HepG2 (cell line): ENCODE measurements at regions of chr1 and their contacts with region 1.

Region 1: DNA sequence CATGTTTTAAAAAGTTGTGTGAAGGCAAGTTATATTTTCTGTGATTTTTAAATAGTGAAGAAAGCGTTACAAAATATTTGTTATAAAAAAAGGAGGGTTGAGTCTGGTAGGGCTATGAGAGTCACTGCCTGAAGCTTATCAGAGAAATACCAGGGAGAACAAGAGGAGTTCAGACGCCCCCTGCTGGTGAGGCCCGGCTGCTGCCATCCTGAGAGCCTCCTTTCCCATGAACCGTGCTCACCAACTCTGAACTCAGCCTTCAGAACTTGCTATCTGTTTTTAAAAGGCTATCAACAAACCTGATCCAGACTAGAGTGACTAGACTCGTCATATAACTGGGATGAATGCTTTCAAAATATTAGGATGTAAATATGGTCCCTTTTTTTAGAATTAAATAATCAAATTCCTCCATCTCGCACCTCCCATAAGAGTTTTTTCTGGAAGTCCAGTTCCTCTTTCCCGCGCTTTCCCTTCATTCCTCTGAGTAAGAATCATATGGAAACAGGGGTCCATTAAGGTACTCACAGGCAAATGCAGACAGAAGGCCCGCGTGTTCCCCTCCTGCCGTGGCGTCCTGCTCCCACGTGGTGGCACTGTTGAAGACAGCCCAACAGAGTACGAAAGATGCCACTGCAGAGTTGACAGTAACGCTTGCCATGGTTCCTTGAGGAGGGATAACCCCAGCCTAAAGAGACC is 26.2 kb upstream of the SPATA6 start:
- DNase-seq: peak; percentile 61
- ATAC-seq: peak; percentile 78
- H3K4me3 ChIP-seq: no peak overlapping the region
- H3K27ac ChIP-seq: no peak overlapping the region
- H3K4me1 ChIP-seq: peaks cover 31% of the 10 kb centered on the region
- H3K27me3 ChIP-seq: no peaks in the 10 kb centered on the region
- CTCF ChIP-seq: peak; percentile 77
- EP300 ChIP-seq: no peak
- POLR2A ChIP-seq: no peak
- RAD21 ChIP-seq: peak; percentile 23; the same call in 1 of the 2 replicates

Region 2: GRCh38 chr1:48356901-48357300 is 141.3 kb before region 1 on chr1:
- CTCF ChIA-PET with region 1: no interaction called
- POLR2A ChIA-PET with region 1: no interaction called
- in situ Hi-C with region 1: no loop called
- intact Hi-C with region 1: loop called (anchors 2 kb)
- DNase-seq: no peak
- ATAC-seq: no peak
- H3K4me3 ChIP-seq: no peak overlapping the region
- H3K27ac ChIP-seq: no peak overlapping the region
- H3K4me1 ChIP-seq: no peaks in the 10 kb centered on the region
- H3K27me3 ChIP-seq: no peaks in the 10 kb centered on the region
- CTCF ChIP-seq: 0 out of 2 replicates have a peak, but pooled peaks have one; percentile 5
- EP300 ChIP-seq: no peak
- POLR2A ChIP-seq: no peak
- RAD21 ChIP-seq: no peak

Region 3: DNA sequence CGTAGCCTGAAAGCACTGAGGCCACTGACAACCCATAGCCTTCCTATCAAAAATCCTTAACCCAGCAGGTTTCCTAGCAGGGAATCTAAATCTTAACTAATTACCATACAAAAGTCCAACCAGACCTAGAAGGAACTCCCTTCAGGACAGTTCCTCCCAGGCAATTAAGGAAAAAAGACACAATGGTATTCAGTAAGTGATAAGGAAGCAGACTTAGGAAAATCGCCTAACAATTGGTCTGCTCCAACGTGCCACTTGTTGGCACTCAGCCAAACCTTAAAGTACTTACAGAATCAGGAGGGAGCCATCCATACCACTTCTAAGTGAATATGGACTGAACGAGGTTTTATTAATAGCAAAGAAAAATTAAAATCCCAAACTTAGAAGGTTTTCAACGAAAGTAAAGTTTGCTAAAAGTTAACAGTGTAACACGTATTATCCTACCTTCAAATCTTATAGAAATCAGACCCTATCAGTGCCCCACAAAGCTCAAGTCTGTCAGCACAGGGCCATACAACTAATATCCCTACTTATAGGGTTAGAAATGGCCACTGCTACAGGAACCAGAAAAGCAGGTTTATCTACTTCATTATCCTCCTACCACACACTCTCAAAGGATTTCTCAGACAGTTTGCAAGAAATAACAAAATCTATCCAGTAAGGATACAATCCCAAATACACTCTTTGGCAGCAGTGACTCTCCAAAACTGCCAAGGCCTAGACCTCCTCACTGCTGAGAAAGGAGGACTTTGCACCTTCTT is 55.2 kb before region 1 on chr1:
- CTCF ChIA-PET with region 1: no interaction called
- POLR2A ChIA-PET with region 1: no interaction called
- in situ Hi-C with region 1: no loop called
- intact Hi-C with region 1: no loop called
- DNase-seq: no peak
- ATAC-seq: no peak
- H3K4me3 ChIP-seq: no peak overlapping the region
- H3K27ac ChIP-seq: no peak overlapping the region
- H3K4me1 ChIP-seq: peaks cover 24% of the 10 kb centered on the region
- H3K27me3 ChIP-seq: no peaks in the 10 kb centered on the region
- CTCF ChIP-seq: no peak
- EP300 ChIP-seq: no peak
- POLR2A ChIP-seq: no peak
- RAD21 ChIP-seq: no peak

Region 4: GRCh38 chr1:48471691-48472576 is 26.3 kb before region 1 on chr1 and contains the start of gene SPATA6:
- CTCF ChIA-PET with region 1: no interaction called
- POLR2A ChIA-PET with region 1: interaction called, 5 read pairs
- in situ Hi-C with region 1: no loop called
- intact Hi-C with region 1: loop called (anchors 1 kb)
- DNase-seq: peak; percentile 83
- ATAC-seq: peak; percentile 96
- H3K4me3 ChIP-seq: peak within 1 kb of the TSS; percentile 66 to 77 (median 75)
- H3K27ac ChIP-seq: no peak within 1 kb of the TSS
- H3K4me1 ChIP-seq: peaks cover 22% of the 10 kb centered on the region
- H3K27me3 ChIP-seq: no peaks in the 10 kb centered on the region; a peak in 1 of 5 replicates
- CTCF ChIP-seq: 0 out of 2 replicates have a peak, but pooled peaks have one; percentile 21
- EP300 ChIP-seq: no peak
- POLR2A ChIP-seq: peak; percentile 44 to 60; a peak in 3 of 4 replicates
- RAD21 ChIP-seq: no peak
- total RNA-seq, gene SPATA6: 1.8 and 3.3 TPM in 2 replicates

Region 5: DNA sequence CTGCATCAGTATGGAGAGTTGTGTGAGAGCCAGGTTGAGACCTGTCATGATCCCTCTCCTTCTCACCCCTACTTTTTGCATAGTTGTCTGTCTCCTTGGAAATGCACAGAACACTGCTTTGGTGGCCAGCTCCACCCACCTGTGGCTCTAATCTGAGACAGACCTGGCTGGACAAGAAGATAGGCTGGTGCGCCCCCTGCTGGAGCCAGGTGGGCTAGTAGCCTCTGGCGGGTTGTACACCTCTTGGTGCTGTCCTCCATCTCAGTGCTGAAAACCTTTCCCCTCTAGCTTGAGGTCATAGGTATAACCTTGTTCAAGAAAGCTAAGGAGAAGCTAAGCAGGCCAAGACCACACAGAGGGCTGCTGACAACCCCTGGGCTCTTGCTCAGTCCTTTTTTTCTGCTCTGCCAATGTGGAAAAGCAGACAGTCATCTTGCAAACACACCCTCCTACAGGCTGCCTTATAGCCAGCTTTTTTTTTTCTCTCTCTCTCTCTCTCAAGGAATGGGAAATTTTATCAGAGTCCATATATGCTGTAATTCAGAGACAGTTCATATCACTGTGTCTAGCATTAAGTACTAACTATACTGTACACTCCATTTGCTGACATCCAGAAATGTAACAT is 32.6 kb after region 1 on chr1:
- CTCF ChIA-PET with region 1: no interaction called
- POLR2A ChIA-PET with region 1: no interaction called
- in situ Hi-C with region 1: no loop called
- intact Hi-C with region 1: no loop called
- DNase-seq: peak; percentile 59
- ATAC-seq: peak; percentile 97
- H3K4me3 ChIP-seq: no peak overlapping the region
- H3K27ac ChIP-seq: no peak overlapping the region
- H3K4me1 ChIP-seq: no peaks in the 10 kb centered on the region
- H3K27me3 ChIP-seq: no peaks in the 10 kb centered on the region
- CTCF ChIP-seq: peak; percentile 91
- EP300 ChIP-seq: no peak
- POLR2A ChIP-seq: no peak
- RAD21 ChIP-seq: peak; percentile 50; the same call in 1 of the 2 replicates

Region 6: GRCh38 chr1:49048188-49048587 is 549.9 kb after region 1 on chr1:
- CTCF ChIA-PET with region 1: no interaction called
- POLR2A ChIA-PET with region 1: no interaction called
- in situ Hi-C with region 1: no loop called
- intact Hi-C with region 1: no loop called
- DNase-seq: no peak
- ATAC-seq: no peak
- H3K4me3 ChIP-seq: no peak overlapping the region
- H3K27ac ChIP-seq: no peak overlapping the region
- H3K4me1 ChIP-seq: no peaks in the 10 kb centered on the region
- H3K27me3 ChIP-seq: no peaks in the 10 kb centered on the region
- CTCF ChIP-seq: no peak
- EP300 ChIP-seq: no peak
- POLR2A ChIP-seq: no peak
- RAD21 ChIP-seq: no peak